Naive thymus-derived CD4-positive, alpha-beta T cell (primary cell): ENCODE measurements at regions of chr14 and their contacts with region 1.

Region 1: GRCh38 chr14:20970983-20971704 is 15.9 kb downstream of the RNASE2 start:
- DNase-seq: peak; percentile 59 to 84 (median 74)
- ATAC-seq: peak; percentile 95
- H3K4me3 ChIP-seq: peak overlapping the region; percentile 92
- H3K4me3 Mint-ChIP-seq: peak overlapping the region; percentile 88 to 95 (median 92)
- H3K27ac ChIP-seq: peak overlapping the region; percentile 25
- H3K27ac Mint-ChIP-seq: peak overlapping the region in 5 of 9 donors; percentile 15 to 85 (median 60)
- H3K4me1 ChIP-seq: peaks cover 0 to 5% of the 10 kb centered on the region in 2 donors
- H3K4me1 Mint-ChIP-seq: peaks cover 5 to 17% (median 13%) of the 10 kb centered on the region in 7 donors
- H3K27me3 ChIP-seq: peaks cover 0 to 3% of the 10 kb centered on the region in 2 donors
- H3K27me3 Mint-ChIP-seq: peaks cover 20 to 44% (median 25%) of the 10 kb centered on the region in 5 donors

Region 2: DNA sequence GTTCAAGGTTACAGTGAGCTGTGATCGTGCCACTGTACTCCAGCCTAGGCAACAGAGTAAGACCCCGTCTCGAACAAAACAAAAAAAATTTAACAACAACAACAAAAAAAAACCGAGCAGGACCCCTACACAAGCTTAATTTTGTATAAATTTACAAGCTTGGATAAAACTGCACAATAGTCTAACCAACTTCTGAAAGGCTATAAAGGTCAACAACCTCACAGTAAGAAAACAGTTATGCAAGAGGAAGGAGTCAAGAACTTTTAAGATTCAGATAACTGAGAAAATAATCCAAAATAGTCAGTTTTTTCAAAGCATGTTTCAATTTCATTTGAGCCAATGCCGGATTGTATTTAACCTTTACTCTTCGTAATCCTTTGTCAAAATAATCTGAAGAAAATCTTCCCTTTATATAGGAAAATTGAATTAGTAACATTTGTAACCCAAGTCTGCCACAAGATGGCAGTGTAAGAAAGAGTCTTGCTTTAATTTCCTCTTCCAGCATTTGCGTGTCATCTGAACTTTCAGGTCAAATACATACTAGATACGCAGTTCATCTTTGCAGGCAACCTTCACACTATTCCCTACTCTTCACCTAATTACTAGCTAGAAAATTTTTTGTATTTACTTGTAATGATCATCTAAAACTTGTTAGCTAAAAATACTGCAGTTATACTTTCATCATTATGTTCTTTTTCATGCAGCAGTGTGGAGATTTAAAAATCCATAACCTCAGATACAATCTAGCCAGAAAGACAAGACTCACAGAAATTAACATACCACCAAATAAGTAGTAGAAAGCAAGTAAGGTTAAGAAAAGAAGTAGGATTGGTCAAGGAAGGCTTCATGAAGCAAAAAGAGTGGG is 643.9 kb before region 1 on chr14:
- CTCF ChIA-PET with region 1: no interaction called
- POLR2A ChIA-PET with region 1: no interaction called
- intact Hi-C with region 1: loop called in 1 of 2 experiments (anchors 5 kb)
- DNase-seq: peak in 7 of 9 donors; percentile 44 to 74 (median 66)
- ATAC-seq: peak; percentile 81
- H3K4me3 ChIP-seq: no peak overlapping the region
- H3K4me3 Mint-ChIP-seq: peak overlapping the region in 5 of 10 donors; percentile 2 to 52 (median 26)
- H3K27ac ChIP-seq: no peak overlapping the region
- H3K27ac Mint-ChIP-seq: peak overlapping the region; percentile 35 to 93 (median 66)
- H3K4me1 ChIP-seq: peaks cover 0 to 4% of the 10 kb centered on the region in 2 donors
- H3K4me1 Mint-ChIP-seq: peaks cover 9 to 42% (median 27%) of the 10 kb centered on the region in 7 donors
- H3K27me3 ChIP-seq: no peaks in the 10 kb centered on the region
- H3K27me3 Mint-ChIP-seq: no peaks in the 10 kb centered on the region

Region 3: DNA sequence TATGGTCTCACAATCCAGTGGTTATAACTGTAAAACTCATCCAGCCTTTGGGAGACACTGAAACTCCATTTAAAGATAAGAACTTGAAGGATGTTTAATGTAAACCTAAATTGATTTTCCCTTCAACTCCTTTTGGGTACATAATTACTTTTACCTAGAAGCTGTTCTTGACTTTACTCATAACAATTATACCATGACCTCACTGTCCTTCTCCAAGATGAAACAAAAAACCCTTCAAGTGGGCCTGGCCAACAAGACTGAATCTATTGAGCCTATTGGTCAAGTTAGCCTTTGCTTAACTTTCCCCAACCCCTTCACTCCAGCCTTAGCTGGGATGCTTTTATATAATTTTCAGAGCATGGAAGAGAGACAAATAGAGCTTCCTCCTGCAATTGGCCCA is 605.2 kb before region 1 on chr14:
- CTCF ChIA-PET with region 1: no interaction called
- POLR2A ChIA-PET with region 1: no interaction called
- intact Hi-C with region 1: no loop called
- DNase-seq: no peak
- ATAC-seq: no peak
- H3K4me3 ChIP-seq: no peak overlapping the region
- H3K4me3 Mint-ChIP-seq: no peak overlapping the region
- H3K27ac ChIP-seq: no peak overlapping the region
- H3K27ac Mint-ChIP-seq: no peak overlapping the region
- H3K4me1 ChIP-seq: no peaks in the 10 kb centered on the region
- H3K4me1 Mint-ChIP-seq: peaks cover 0 to 3% (median 0%) of the 10 kb centered on the region in 7 donors
- H3K27me3 ChIP-seq: no peaks in the 10 kb centered on the region
- H3K27me3 Mint-ChIP-seq: no peaks in the 10 kb centered on the region

Region 4: GRCh38 chr14:20662968-20663732 is 308.0 kb before region 1 on chr14:
- CTCF ChIA-PET with region 1: no interaction called
- POLR2A ChIA-PET with region 1: no interaction called
- intact Hi-C with region 1: loop called in 1 of 2 experiments (anchors 1 kb)
- DNase-seq: peak; percentile 49 to 77 (median 66)
- ATAC-seq: peak; percentile 91
- H3K4me3 ChIP-seq: peak overlapping the region; percentile 59
- H3K4me3 Mint-ChIP-seq: peak overlapping the region; percentile 72 to 86 (median 79)
- H3K27ac ChIP-seq: no peak overlapping the region
- H3K27ac Mint-ChIP-seq: peak overlapping the region in 8 of 9 donors; percentile 18 to 74 (median 39)
- H3K4me1 ChIP-seq: peaks cover 3 to 17% of the 10 kb centered on the region in 2 donors
- H3K4me1 Mint-ChIP-seq: peaks cover 23 to 53% (median 25%) of the 10 kb centered on the region in 7 donors
- H3K27me3 ChIP-seq: no peaks in the 10 kb centered on the region
- H3K27me3 Mint-ChIP-seq: peaks cover 5 to 23% (median 19%) of the 10 kb centered on the region in 5 donors

Region 5: DNA sequence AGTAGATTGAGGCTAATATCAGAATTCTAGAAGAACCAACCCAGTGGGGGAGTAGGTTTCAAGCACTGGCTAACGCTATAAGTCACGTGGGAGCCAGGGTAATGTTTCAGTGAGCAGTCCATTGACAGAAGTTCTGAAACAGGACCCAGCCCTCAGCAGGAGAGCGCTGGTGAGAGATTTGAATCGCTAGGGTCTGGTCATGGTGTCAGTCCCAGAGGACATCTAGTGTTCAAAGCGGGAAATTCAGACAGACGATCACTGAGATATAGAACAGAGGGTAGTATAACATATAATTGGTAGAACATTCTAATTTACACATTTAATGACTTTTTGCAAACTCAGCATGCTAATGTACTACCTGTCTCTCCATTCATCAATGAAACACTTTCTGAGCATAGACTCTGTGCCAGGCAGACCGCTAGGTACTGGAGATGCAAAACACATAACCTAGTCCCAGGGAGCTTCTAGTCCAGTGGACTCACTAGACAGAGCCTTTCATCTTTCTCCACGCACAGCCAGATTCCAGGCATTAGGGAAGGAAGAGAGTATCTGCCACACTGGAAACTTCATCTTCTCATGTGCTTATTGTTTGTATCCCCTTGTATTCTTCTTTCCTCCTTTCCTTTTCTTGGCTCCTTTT is 115.4 kb before region 1 on chr14:
- CTCF ChIA-PET with region 1: interaction called, 21 read pairs
- POLR2A ChIA-PET with region 1: no interaction called
- intact Hi-C with region 1: loop called (anchors 1 kb)
- DNase-seq: peak in 7 of 9 donors; percentile 25 to 64 (median 47)
- ATAC-seq: peak; percentile 89
- H3K4me3 ChIP-seq: no peak overlapping the region
- H3K4me3 Mint-ChIP-seq: no peak overlapping the region
- H3K27ac ChIP-seq: no peak overlapping the region
- H3K27ac Mint-ChIP-seq: no peak overlapping the region
- H3K4me1 ChIP-seq: no peaks in the 10 kb centered on the region
- H3K4me1 Mint-ChIP-seq: peaks cover 0 to 7% (median 0%) of the 10 kb centered on the region in 7 donors
- H3K27me3 ChIP-seq: no peaks in the 10 kb centered on the region
- H3K27me3 Mint-ChIP-seq: peaks cover 13 to 35% (median 28%) of the 10 kb centered on the region in 5 donors

Region 6: GRCh38 chr14:20989572-20990551 is 18.7 kb after region 1 on chr14 and contains the start of gene METTL17:
- CTCF ChIA-PET with region 1: interaction called, 4 read pairs
- POLR2A ChIA-PET with region 1: interaction called, 7 read pairs
- intact Hi-C with region 1: loop called (anchors 1 kb)
- DNase-seq: peak; percentile 64 to 88 (median 81)
- ATAC-seq: peak; percentile 95
- H3K4me3 ChIP-seq: peak within 1 kb of the TSS; percentile 86
- H3K4me3 Mint-ChIP-seq: peak within 1 kb of the TSS; percentile 86 to 97 (median 92)
- H3K27ac ChIP-seq: peak within 1 kb of the TSS; percentile 77
- H3K27ac Mint-ChIP-seq: peak within 1 kb of the TSS; percentile 86 to 98 (median 95)
- H3K4me1 ChIP-seq: peaks cover 12 to 16% of the 10 kb centered on the region in 2 donors
- H3K4me1 Mint-ChIP-seq: peaks cover 0 to 46% (median 37%) of the 10 kb centered on the region in 7 donors
- H3K27me3 ChIP-seq: no peaks in the 10 kb centered on the region
- H3K27me3 Mint-ChIP-seq: no peaks in the 10 kb centered on the region
- total RNA-seq, gene METTL17: 75.4 to 129 (median 96.7) TPM

Region 7: GRCh38 chr14:22929104-22929847 is 1958.1 kb after region 1 on chr14 and contains the start of gene PRMT5:
- CTCF ChIA-PET with region 1: no interaction called
- POLR2A ChIA-PET with region 1: no interaction called
- intact Hi-C with region 1: no loop called
- DNase-seq: peak; percentile 81 to 100 (median 99)
- ATAC-seq: peak; percentile 97
- H3K4me3 ChIP-seq: peak within 1 kb of the TSS; percentile 91
- H3K4me3 Mint-ChIP-seq: no peak within 1 kb of the TSS
- H3K27ac ChIP-seq: peak within 1 kb of the TSS; percentile 91
- H3K27ac Mint-ChIP-seq: no peak within 1 kb of the TSS
- H3K4me1 ChIP-seq: peaks cover 9 to 17% of the 10 kb centered on the region in 2 donors
- H3K4me1 Mint-ChIP-seq: peaks cover 5 to 36% (median 20%) of the 10 kb centered on the region in 7 donors
- H3K27me3 ChIP-seq: no peaks in the 10 kb centered on the region
- H3K27me3 Mint-ChIP-seq: no peaks in the 10 kb centered on the region
- total RNA-seq, gene PRMT5: 24.9 to 82.8 (median 34.2) TPM